ENCODE measurements at regions of chr3 and their contacts with region 1.

Region 1: GRCh38 chr3:53287131-53287629 is 31.4 kb upstream of the TKT start:
- DNase-seq: peak; percentile 55
- ATAC-seq: peak; percentile 92
- H3K4me3 Mint-ChIP-seq: no peak overlapping the region
- H3K27ac Mint-ChIP-seq: peak overlapping the region; percentile 85
- H3K4me1 Mint-ChIP-seq: peaks cover 14% of the 10 kb centered on the region
- H3K27me3 Mint-ChIP-seq: no peaks in the 10 kb centered on the region

Region 2: GRCh38 chr3:53187430-53187829 is 99.8 kb before region 1 on chr3:
- CTCF ChIA-PET with region 1: no interaction called
- POLR2A ChIA-PET with region 1: no interaction called
- intact Hi-C with region 1: no loop called
- DNase-seq: no peak
- ATAC-seq: no peak
- H3K4me3 Mint-ChIP-seq: no peak overlapping the region
- H3K27ac Mint-ChIP-seq: no peak overlapping the region
- H3K4me1 Mint-ChIP-seq: no peaks in the 10 kb centered on the region
- H3K27me3 Mint-ChIP-seq: no peaks in the 10 kb centered on the region

Region 3: DNA sequence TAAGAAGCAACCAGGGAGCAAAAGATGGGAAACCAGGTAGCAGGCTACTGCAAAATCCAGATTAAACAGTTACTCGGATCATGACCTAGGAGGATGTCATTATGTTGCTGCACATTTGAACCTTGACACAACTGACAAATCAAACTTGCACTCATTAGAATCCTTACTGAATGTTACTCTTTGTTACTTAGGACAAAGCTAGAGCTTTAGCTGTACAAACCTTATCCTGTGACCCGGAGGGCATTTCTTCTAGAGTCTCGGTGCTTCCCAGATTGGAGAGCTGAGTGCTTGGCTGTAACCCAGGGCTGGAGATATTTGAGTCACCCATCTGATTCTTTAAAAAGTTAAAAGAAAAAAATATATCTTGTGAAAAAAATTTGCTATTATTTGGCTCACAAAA is 16.8 kb after region 1 on chr3:
- CTCF ChIA-PET with region 1: interaction called, 14 read pairs
- POLR2A ChIA-PET with region 1: no interaction called
- intact Hi-C with region 1: no loop called
- DNase-seq: no peak
- ATAC-seq: no peak
- H3K4me3 Mint-ChIP-seq: no peak overlapping the region
- H3K27ac Mint-ChIP-seq: no peak overlapping the region
- H3K4me1 Mint-ChIP-seq: no peaks in the 10 kb centered on the region
- H3K27me3 Mint-ChIP-seq: no peaks in the 10 kb centered on the region